HEK293 (cell line): ENCODE measurements at regions of chr11 and their contacts with region 1.

Region 1: GRCh38 chr11:67401495-67402191 is at the start of gene PPP1CA:
- H3K4me3 ChIP-seq: peak within 1 kb of the TSS; percentile 79
- H3K27ac ChIP-seq: peak within 1 kb of the TSS; percentile 88
- H3K4me1 ChIP-seq: no peaks in the 10 kb centered on the region
- CTCF ChIP-seq: no peak

Region 2: GRCh38 chr11:67382276-67383136 is 19.1 kb before region 1 on chr11:
- CTCF ChIA-PET with region 1: interaction called, 12 read pairs
- POLR2A ChIA-PET with region 1: interaction called, 5 read pairs
- H3K4me3 ChIP-seq: no peak overlapping the region
- H3K27ac ChIP-seq: no peak overlapping the region
- H3K4me1 ChIP-seq: no peaks in the 10 kb centered on the region
- CTCF ChIP-seq: peak; percentile 92

Region 3: DNA sequence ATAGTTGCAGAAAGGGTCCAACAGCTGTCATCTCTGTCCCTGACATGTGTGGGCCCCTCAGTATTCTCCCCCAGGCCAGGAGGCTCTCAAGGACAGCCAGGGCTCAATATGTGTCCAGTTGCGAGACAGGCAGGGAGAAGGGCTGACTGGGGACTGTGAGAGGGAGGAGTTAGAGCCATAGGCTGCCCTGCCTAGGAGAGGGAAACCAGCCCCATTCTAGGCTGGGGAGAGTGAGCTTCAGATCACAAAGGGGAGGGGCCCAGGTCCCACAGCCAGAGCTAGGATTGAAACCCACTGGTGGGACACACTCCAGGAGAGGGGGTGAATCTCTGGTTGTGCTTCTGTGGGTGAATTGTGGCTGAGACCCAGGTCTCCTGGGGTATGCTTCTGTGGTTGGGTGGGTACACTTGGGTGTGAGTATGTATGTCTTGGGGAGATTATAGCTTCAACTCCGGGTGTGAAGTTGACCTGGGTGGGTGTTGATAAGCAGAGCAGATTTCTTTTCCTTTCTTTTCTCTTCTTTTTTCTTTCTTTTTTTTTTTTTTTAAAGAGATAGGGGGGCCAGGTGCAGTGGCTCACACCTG is 11.7 kb after region 1 on chr11:
- CTCF ChIA-PET with region 1: interaction called, 11 read pairs
- POLR2A ChIA-PET with region 1: interaction called, 25 read pairs
- H3K4me3 ChIP-seq: no peak overlapping the region
- H3K27ac ChIP-seq: no peak overlapping the region
- H3K4me1 ChIP-seq: no peaks in the 10 kb centered on the region
- CTCF ChIP-seq: no peak

Region 4: GRCh38 chr11:67428052-67428914 is 26.6 kb after region 1 on chr11 and contains the start of gene RPS6KB2:
- CTCF ChIA-PET with region 1: interaction called, 3 read pairs
- POLR2A ChIA-PET with region 1: interaction called, 16 read pairs
- H3K4me3 ChIP-seq: peak within 1 kb of the TSS; percentile 81
- H3K27ac ChIP-seq: peak within 1 kb of the TSS; percentile 77
- H3K4me1 ChIP-seq: peaks cover 5% of the 10 kb centered on the region; the same call in 1 of the 2 replicates
- CTCF ChIP-seq: no peak

Region 5: GRCh38 chr11:67468835-67469811 is 67.5 kb after region 1 on chr11 and contains the start of gene TMEM134:
- CTCF ChIA-PET with region 1: interaction called, 10 read pairs
- POLR2A ChIA-PET with region 1: interaction called, 23 read pairs
- H3K4me3 ChIP-seq: peak within 1 kb of the TSS; percentile 71
- H3K27ac ChIP-seq: peak within 1 kb of the TSS; percentile 47; the same call in 1 of the 2 replicates
- H3K4me1 ChIP-seq: no peaks in the 10 kb centered on the region; the same call in 1 of the 2 replicates
- CTCF ChIP-seq: peak; percentile 64